Cardiac septum (tissue), 1 donor: ENCODE measurements at regions of chr5 and their contacts with region 1.

Region 1: DNA sequence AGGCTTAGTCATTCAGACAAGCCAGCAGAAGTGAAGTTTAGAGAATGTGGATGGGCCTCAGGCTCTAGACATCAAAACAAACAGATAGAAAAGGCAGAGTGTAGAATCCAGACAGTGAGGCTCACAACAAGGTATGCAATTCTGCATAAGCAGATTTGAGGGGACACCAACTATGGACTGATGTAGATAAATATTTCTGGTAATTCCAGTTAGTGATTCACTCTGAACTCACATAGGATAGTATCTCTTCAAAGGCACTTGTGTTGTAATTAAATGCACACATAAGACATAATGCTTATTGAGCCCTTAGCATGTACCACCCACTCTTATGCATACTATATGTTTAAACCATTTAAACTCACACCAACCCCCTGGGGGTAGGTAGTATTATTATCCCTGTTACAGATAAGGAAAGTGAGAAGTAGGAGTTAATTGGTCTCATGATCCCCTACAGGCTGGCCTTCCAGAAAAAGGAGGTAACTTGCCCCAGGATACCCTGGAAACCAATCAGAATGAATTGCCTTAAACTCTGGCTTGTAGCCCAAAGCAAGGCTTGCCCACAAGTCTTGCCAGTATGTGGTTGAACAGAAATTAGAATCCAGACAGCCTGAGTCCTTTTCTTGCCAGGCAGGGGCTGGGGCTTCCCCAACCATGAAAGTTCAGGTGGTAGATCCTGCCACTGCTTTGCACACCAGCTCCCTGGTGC is 39.5 kb upstream of the HSPB3 start:
- DNase-seq: no peak

Region 2: DNA sequence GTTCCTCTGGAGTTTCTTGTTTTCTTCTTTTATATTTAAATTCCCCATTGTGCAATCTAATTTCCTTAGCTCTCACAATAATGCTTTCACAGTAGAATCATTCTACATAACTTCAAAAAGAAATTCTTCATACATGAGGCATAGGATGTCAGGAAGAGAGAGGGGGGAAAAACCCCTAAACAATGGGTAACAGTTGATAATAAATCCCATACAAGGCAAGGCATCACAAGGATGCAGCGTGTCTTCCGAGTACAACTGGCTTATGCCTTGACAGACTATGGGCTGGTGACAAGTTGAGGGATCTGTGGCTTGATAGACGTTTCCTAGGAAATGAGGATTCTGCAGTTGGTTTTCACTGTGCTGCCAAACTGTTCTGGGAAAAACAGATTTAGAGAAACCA is 353.1 kb before region 1 on chr5:
- intact Hi-C with region 1: no loop called
- DNase-seq: no peak

Region 3: DNA sequence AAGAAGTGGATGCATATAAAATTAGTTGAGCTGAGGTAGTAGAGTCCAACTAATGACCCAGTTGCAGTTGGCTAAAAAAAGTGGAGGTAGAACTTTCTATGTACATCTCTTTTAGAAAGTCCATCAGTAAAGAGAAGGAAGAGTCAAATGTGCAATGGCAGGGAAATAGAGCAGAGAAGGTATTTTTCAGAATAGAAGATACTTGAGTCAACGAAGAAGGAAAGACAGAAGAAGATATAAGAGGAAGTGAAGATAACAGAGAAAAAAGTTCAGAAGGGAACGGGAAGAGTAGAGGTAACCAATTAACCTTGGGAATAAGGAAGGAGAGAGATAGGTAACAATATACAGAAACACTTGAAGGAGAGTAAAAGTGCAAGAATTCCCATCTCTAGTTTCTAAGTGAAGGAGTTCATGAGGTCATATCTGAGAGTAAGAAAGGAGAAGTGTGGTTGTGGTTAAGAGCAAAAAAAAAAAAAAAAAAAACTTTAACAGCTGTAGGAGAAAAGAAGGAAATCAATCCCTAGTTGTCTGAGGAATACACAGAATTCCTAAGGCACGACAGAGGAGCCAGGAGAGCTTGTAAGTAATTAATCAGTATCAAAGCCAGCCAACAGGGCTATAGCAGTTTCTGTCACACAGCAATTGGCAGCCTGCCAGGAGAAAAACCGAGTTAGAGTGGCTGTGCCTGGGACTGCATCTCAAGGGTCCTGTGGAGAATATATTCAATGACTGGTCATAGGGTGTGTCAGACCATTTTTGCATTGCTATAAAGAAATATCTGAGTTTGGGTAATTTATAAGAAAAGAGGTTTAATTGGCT is 166.6 kb before region 1 on chr5:
- intact Hi-C with region 1: loop called (anchors 5 kb)
- DNase-seq: no peak

Region 4: GRCh38 chr5:54317511-54318260 is 98.4 kb before region 1 on chr5:
- intact Hi-C with region 1: loop called (anchors 5 kb)
- DNase-seq: no peak